PC-9 (cell line): ENCODE measurements at regions of chr6 and their contacts with region 1.

Region 1: GRCh38 chr6:912871-913835 is 220.2 kb upstream of the EXOC2 start:
- DNase-seq: peak; percentile 34 to 58
- H3K4me3 ChIP-seq: no peak overlapping the region
- H3K27ac ChIP-seq: no peak overlapping the region
- H3K4me1 ChIP-seq: peaks cover 7% of the 10 kb centered on the region
- H3K27me3 ChIP-seq: no peaks in the 10 kb centered on the region
- CTCF ChIP-seq: peak; percentile 49

Region 2: DNA sequence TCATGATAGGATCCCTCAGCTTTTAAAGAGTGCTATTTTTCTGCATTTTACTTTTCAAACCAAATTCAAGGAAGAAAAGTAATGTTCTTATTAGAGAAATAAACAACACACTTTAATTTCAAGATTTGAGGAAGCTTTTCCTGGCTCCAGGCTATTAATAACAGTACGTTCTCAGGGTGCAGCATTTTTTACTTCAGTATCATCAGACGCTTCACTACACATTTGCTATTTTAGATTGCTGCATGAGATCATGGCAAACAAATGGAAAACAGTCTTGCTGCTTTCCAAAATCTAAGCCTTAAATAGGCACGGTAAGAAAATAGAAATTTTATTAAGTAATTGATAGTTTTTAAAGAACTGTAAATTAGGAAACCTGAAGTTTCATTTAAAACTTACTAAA is 33.4 kb after region 1 on chr6:
- CTCF ChIA-PET with region 1: no interaction called
- POLR2A ChIA-PET with region 1: no interaction called
- intact Hi-C with region 1: no loop called
- DNase-seq: no peak
- H3K4me3 ChIP-seq: no peak overlapping the region
- H3K27ac ChIP-seq: no peak overlapping the region
- H3K4me1 ChIP-seq: no peaks in the 10 kb centered on the region
- H3K27me3 ChIP-seq: no peaks in the 10 kb centered on the region
- CTCF ChIP-seq: no peak

Region 3: GRCh38 chr6:958531-958930 is 45.4 kb after region 1 on chr6:
- CTCF ChIA-PET with region 1: no interaction called
- POLR2A ChIA-PET with region 1: no interaction called
- intact Hi-C with region 1: no loop called
- DNase-seq: no peak
- H3K4me3 ChIP-seq: no peak overlapping the region
- H3K27ac ChIP-seq: no peak overlapping the region
- H3K4me1 ChIP-seq: no peaks in the 10 kb centered on the region
- H3K27me3 ChIP-seq: no peaks in the 10 kb centered on the region
- CTCF ChIP-seq: no peak

Region 4: DNA sequence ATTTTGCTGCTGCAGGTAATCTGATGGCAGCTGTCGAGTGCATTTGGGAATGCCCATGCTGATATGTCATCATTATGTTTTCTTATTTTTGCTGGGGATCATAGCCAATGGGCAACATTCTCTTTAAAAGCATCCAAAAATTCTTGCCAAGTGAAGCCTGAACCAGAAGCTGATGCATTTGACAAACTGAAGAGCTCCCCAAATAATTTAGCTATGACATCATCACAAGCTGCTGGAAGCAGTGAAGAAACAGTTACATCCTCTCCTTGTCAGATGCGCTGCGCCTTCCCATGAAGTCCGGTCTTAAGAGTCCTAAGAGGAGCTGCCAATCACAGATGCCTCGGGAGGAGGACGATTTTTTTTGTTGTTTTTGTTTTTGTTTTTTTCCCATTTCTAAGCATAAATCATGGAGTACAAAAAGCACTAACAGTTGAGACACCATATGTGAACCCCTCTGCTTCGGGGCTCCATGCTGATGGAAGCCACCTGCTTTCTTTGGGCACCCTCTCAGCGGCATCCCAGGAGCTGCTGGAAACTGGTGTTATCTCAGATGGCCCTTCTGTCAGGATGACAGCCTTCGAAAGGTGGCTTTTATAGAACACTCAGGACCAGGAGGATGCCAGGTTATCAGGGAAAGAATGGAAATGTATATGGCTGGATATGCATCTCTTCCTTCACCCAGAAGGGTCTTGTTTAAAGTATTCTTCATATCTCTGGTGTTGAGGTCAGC is 342.6 kb after region 1 on chr6:
- CTCF ChIA-PET with region 1: no interaction called
- POLR2A ChIA-PET with region 1: no interaction called
- intact Hi-C with region 1: loop called (anchors 10 kb)
- DNase-seq: no peak
- H3K4me3 ChIP-seq: no peak overlapping the region
- H3K27ac ChIP-seq: no peak overlapping the region
- H3K4me1 ChIP-seq: peaks cover 28% of the 10 kb centered on the region
- H3K27me3 ChIP-seq: no peaks in the 10 kb centered on the region
- CTCF ChIP-seq: no peak

Region 5: GRCh38 chr6:1381481-1382330 is 468.6 kb after region 1 on chr6:
- CTCF ChIA-PET with region 1: no interaction called
- POLR2A ChIA-PET with region 1: no interaction called
- intact Hi-C with region 1: loop called (anchors 5 kb)
- DNase-seq: peak in 1 of 2 experiments; percentile 73
- H3K4me3 ChIP-seq: peak overlapping the region; percentile 49; the same call in 1 of the 2 replicates
- H3K27ac ChIP-seq: no peak overlapping the region
- H3K4me1 ChIP-seq: no peaks in the 10 kb centered on the region
- H3K27me3 ChIP-seq: no peaks in the 10 kb centered on the region
- CTCF ChIP-seq: peak; percentile 67